Activated CD4-positive, alpha-beta memory T cell treated with anti-CD3 and anti-CD28 coated beads for 36 hours (primary cell): ENCODE measurements at regions of chr9 and their contacts with region 1.

Region 1: GRCh38 chr9:113275157-113276131 is at the starts of genes CDC26 and PRPF4:
- DNase-seq: peak; percentile 97
- H3K4me3 Mint-ChIP-seq: no peak within 1 kb of the TSS
- H3K27ac Mint-ChIP-seq: no peak within 1 kb of the TSS
- H3K4me1 Mint-ChIP-seq: peaks cover 35% of the 10 kb centered on the region
- H3K27me3 Mint-ChIP-seq: no peaks in the 10 kb centered on the region
- total RNA-seq, gene CDC26: 49.8 to 50.9 TPM
- total RNA-seq, gene PRPF4: 47.6 to 48.7 TPM

Region 2: GRCh38 chr9:113150670-113151611 is 124.5 kb before region 1 on chr9 and contains the start of gene SLC31A2:
- CTCF ChIA-PET with region 1: interaction called, 12 read pairs
- POLR2A ChIA-PET with region 1: no interaction called
- intact Hi-C with region 1: loop called (anchors 2 kb)
- DNase-seq: peak; percentile 91
- H3K4me3 Mint-ChIP-seq: peak within 1 kb of the TSS; percentile 80
- H3K27ac Mint-ChIP-seq: peak within 1 kb of the TSS; percentile 64
- H3K4me1 Mint-ChIP-seq: peaks cover 27% of the 10 kb centered on the region
- H3K27me3 Mint-ChIP-seq: no peaks in the 10 kb centered on the region
- total RNA-seq, gene SLC31A2: 5.1 to 6.7 TPM

Region 3: GRCh38 chr9:113221003-113221799 is 54.2 kb before region 1 on chr9 and contains the starts of genes FKBP15 and SLC31A1:
- CTCF ChIA-PET with region 1: interaction called, 46 read pairs
- POLR2A ChIA-PET with region 1: interaction called, 37 read pairs
- intact Hi-C with region 1: loop called (anchors 1 kb)
- DNase-seq: peak; percentile 98
- H3K4me3 Mint-ChIP-seq: peak within 1 kb of the TSS; percentile 94
- H3K27ac Mint-ChIP-seq: peak within 1 kb of the TSS; percentile 92
- H3K4me1 Mint-ChIP-seq: peaks cover 34% of the 10 kb centered on the region
- H3K27me3 Mint-ChIP-seq: no peaks in the 10 kb centered on the region
- total RNA-seq, gene FKBP15: 25.8 to 27.7 TPM
- total RNA-seq, gene SLC31A1: 12.1 to 12.5 TPM

Region 4: DNA sequence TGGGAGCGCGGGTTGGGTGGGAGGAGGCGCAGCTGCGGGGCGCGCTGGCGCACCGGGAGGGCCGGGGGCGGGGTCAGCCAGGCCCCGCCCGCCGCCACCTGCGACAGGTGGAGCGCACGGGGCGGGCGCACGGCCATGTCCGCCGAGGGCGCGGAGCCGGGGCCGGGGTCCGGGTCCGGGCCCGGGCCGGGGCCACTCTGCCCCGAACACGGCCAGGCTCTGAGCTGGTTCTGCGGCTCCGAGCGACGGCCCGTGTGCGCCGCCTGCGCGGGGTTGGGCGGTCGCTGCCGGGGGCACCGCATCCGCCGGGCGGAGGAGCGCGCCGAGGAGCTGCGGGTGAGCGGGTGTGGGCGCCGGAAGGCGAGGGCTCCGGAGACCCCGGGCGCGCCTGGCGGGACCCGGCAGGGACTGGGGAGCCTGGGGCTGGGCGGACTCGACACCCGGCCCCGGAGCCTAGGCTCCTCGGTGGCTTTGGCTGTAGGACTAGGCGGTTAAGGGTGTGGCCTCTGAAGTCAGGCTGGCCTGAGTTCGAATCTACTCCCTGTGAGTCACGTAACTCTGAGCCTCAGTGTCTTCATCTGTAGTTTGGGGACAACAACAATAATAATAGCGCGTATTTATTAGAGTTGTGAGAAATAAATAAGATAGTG is 74.1 kb after region 1 on chr9 and contains the start of gene BSPRY:
- CTCF ChIA-PET with region 1: interaction called, 6 read pairs
- POLR2A ChIA-PET with region 1: interaction called, 11 read pairs
- intact Hi-C with region 1: no loop called
- DNase-seq: peak; percentile 41
- H3K4me3 Mint-ChIP-seq: peak within 1 kb of the TSS; percentile 77
- H3K27ac Mint-ChIP-seq: peak within 1 kb of the TSS; percentile 69
- H3K4me1 Mint-ChIP-seq: peaks cover 56% of the 10 kb centered on the region
- H3K27me3 Mint-ChIP-seq: peaks cover 32% of the 10 kb centered on the region
- total RNA-seq, gene BSPRY: 7.6 to 8.5 TPM

Region 5: GRCh38 chr9:113401027-113401792 is 125.8 kb after region 1 on chr9 and contains the start of gene ALAD:
- CTCF ChIA-PET with region 1: interaction called, 37 read pairs
- POLR2A ChIA-PET with region 1: interaction called, 5 read pairs
- intact Hi-C with region 1: loop called (anchors 1 kb)
- DNase-seq: peak; percentile 99
- H3K4me3 Mint-ChIP-seq: peak within 1 kb of the TSS; percentile 91
- H3K27ac Mint-ChIP-seq: peak within 1 kb of the TSS; percentile 78
- H3K4me1 Mint-ChIP-seq: peaks cover 19% of the 10 kb centered on the region
- H3K27me3 Mint-ChIP-seq: no peaks in the 10 kb centered on the region
- total RNA-seq, gene ALAD: 21.4 to 22.9 TPM

Region 6: DNA sequence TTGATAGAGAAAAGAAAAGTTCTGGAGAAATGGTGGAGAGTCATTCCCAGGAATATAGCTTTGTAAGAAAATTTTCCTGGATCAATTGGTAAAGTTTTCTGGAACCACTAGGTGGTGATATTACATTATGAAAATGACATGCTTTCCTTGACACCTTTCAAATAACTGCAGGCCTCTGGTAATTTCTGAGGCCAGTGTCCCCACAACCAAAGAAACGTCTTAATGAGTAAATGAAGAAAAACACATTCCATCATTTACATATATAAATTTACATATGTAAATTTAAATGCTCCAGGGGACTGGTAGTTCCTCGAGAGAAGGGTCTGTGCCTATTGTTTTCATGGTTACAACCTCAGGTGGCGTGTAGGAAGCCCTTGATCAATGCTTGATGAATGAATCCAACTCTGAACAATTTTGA is 170.9 kb after region 1 on chr9:
- CTCF ChIA-PET with region 1: interaction called, 16 read pairs
- POLR2A ChIA-PET with region 1: no interaction called
- intact Hi-C with region 1: no loop called
- DNase-seq: no peak
- H3K4me3 Mint-ChIP-seq: no peak overlapping the region
- H3K27ac Mint-ChIP-seq: peak overlapping the region; percentile 55
- H3K4me1 Mint-ChIP-seq: no peaks in the 10 kb centered on the region
- H3K27me3 Mint-ChIP-seq: no peaks in the 10 kb centered on the region

Region 7: DNA sequence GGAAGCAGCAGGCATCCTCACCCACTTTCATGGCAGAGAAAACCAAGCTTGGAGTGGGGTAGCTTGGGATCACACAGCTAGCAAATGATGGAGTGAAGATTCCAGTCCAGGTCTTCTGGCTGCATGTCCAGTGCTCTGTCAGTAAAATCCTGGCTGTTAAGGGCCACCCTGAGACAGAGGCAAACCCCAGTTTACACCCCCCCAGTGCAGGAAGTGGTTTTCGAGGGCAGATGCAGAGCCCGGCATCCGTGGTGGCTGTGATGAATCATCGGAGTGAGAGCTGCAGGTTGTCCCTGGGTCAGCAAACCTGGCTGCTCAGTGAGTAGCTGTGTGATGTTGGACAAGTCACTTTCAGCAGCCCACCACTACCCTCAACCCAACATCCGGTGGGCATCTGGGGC is 303.4 kb after region 1 on chr9:
- CTCF ChIA-PET with region 1: interaction called, 5 read pairs
- POLR2A ChIA-PET with region 1: interaction called, 4 read pairs
- intact Hi-C with region 1: loop called (anchors 1 kb)
- DNase-seq: peak; percentile 96
- H3K4me3 Mint-ChIP-seq: peak overlapping the region; percentile 85
- H3K27ac Mint-ChIP-seq: peak overlapping the region; percentile 96
- H3K4me1 Mint-ChIP-seq: peaks cover 75% of the 10 kb centered on the region
- H3K27me3 Mint-ChIP-seq: no peaks in the 10 kb centered on the region